A549 (cell line): ENCODE measurements at regions of chr11 and their contacts with region 1.

Region 1: GRCh38 chr11:86608251-86608799 is 64.1 kb downstream of the ME3 start:
- DNase-seq: peak; percentile 47 to 84
- ATAC-seq: peak; percentile 82 to 87
- H3K4me3 ChIP-seq: no peak overlapping the region
- H3K27ac ChIP-seq: peak overlapping the region; percentile 61 to 77
- H3K4me1 ChIP-seq: peaks cover 37% of the 10 kb centered on the region
- CTCF ChIP-seq: peak; percentile 99
- EP300 ChIP-seq: no peak; a peak in 1 of 5 replicates
- POLR2A ChIP-seq: no peak
- RAD21 ChIP-seq: peak; percentile 79 to 95

Region 2: DNA sequence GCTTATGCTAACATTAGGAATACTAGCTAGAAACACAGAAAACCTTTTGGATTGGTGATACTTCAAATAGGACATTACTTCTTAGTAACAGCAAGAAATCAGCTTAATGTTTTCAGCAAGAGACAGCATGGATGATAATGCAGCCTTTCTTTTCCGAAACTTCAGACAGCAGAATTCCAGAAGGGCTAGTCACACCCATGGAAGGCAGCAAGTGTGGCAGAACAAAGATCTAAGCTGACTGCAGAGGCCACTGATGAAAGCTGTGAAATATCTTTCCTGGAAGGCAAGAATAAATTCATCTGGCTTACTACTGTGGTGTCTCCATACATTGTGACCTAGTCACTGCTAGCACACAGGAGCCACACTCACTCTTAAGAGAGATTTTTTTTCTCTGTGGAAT is 652.8 kb before region 1 on chr11:
- CTCF ChIA-PET with region 1: no interaction called
- POLR2A ChIA-PET with region 1: no interaction called
- DNase-seq: no peak
- ATAC-seq: peak in 1 of 2 experiments; percentile 27; a peak in 1 of 6 replicates
- H3K4me3 ChIP-seq: no peak overlapping the region
- H3K27ac ChIP-seq: no peak overlapping the region
- H3K4me1 ChIP-seq: peaks cover 4% of the 10 kb centered on the region; the same call in 1 of the 3 replicates
- CTCF ChIP-seq: no peak
- EP300 ChIP-seq: no peak
- POLR2A ChIP-seq: no peak
- RAD21 ChIP-seq: no peak

Region 3: GRCh38 chr11:86571273-86571948 is 36.9 kb before region 1 on chr11:
- CTCF ChIA-PET with region 1: interaction called, 12 read pairs
- POLR2A ChIA-PET with region 1: no interaction called
- DNase-seq: peak; percentile 69 to 88
- ATAC-seq: peak; percentile 84 to 94
- H3K4me3 ChIP-seq: no peak overlapping the region
- H3K27ac ChIP-seq: peak overlapping the region; percentile 52 to 78
- H3K4me1 ChIP-seq: peaks cover 69% of the 10 kb centered on the region
- CTCF ChIP-seq: peak; percentile 60
- EP300 ChIP-seq: no peak
- POLR2A ChIP-seq: no peak
- RAD21 ChIP-seq: peak; percentile 59 to 73

Region 4: GRCh38 chr11:86592659-86593451 is 15.5 kb before region 1 on chr11:
- CTCF ChIA-PET with region 1: interaction called, 34 read pairs
- POLR2A ChIA-PET with region 1: no interaction called
- DNase-seq: peak; percentile 82 to 97
- ATAC-seq: peak; percentile 84 to 94
- H3K4me3 ChIP-seq: no peak overlapping the region
- H3K27ac ChIP-seq: peak overlapping the region; percentile 89 to 90
- H3K4me1 ChIP-seq: peaks cover 54% of the 10 kb centered on the region
- CTCF ChIP-seq: no peak
- EP300 ChIP-seq: peak; percentile 65 to 81; a peak in 2 of 5 replicates
- POLR2A ChIP-seq: no peak
- RAD21 ChIP-seq: peak in 1 of 2 experiments; percentile 40; a peak in 1 of 5 replicates

Region 5: GRCh38 chr11:86671682-86672621 is 63.6 kb after region 1 on chr11 and contains the start of gene ME3:
- CTCF ChIA-PET with region 1: interaction called, 16 read pairs
- POLR2A ChIA-PET with region 1: no interaction called
- DNase-seq: peak; percentile 60 to 76
- ATAC-seq: peak; percentile 87 to 91
- H3K4me3 ChIP-seq: peak within 1 kb of the TSS; percentile 61
- H3K27ac ChIP-seq: peak within 1 kb of the TSS; percentile 94 to 99
- H3K4me1 ChIP-seq: peaks cover 32% of the 10 kb centered on the region
- CTCF ChIP-seq: no peak
- EP300 ChIP-seq: no peak
- POLR2A ChIP-seq: peak; percentile 10
- RAD21 ChIP-seq: no peak
- polyA plus RNA-seq, gene ME3: 21.4 and 22.3 TPM in 2 replicates

Region 6: GRCh38 chr11:86802601-86803051 is 194.3 kb after region 1 on chr11:
- CTCF ChIA-PET with region 1: interaction called, 44 read pairs
- POLR2A ChIA-PET with region 1: interaction called, 5 read pairs
- DNase-seq: peak; percentile 62 to 84
- ATAC-seq: peak; percentile 40 to 70; a peak in 5 of 6 replicates
- H3K4me3 ChIP-seq: peak overlapping the region; percentile 85
- H3K27ac ChIP-seq: peak overlapping the region; percentile 93 to 96
- H3K4me1 ChIP-seq: peaks cover 65% of the 10 kb centered on the region
- CTCF ChIP-seq: peak; percentile 49
- EP300 ChIP-seq: 0 out of 5 replicates have a peak, but pooled peaks of 1 of the 2 experiments have one; percentile 16
- POLR2A ChIP-seq: no peak
- RAD21 ChIP-seq: peak; percentile 59 to 60

Region 7: DNA sequence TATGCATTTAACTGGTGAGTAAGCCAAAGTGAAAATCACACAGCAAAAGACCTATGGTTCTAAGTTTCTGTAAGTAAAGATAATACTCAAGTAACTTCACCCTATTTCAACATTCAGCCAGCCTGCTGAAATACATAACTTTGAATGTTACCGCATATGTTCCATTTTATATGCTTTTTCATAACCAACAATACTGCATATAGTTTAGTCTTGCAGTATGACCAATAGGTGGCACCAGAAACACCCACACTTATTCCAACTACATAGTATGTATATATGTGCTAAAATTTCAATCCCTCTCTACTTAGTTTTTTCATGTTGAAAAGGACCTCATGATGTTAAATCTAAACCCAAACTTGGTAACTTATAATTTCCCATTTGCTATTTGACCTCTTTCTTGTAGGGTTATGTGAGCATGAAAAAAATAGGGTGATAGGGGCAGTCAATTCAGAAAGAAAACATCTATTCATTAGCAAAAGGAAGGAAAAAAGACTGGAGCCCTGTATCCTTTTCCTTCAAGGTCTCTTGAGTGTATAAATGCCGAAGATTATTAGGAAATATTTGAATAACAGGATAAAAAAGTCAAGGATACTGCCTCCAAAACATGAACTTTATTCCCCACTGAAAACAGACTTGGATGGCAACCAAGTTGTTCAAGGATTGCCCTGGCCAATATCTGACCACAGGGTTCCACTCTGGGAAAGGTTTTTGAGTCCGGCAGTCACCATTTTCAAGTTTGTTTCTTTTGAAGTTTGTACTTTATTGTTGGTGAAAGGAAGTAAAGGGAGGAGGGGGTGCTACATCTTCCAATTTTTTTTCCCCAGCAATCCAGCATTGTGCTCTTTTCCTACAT is 370.7 kb after region 1 on chr11:
- CTCF ChIA-PET with region 1: no interaction called
- POLR2A ChIA-PET with region 1: no interaction called
- DNase-seq: peak; percentile 38 to 56
- ATAC-seq: peak; percentile 88 to 95; a peak in 5 of 6 replicates
- H3K4me3 ChIP-seq: no peak overlapping the region
- H3K27ac ChIP-seq: no peak overlapping the region
- H3K4me1 ChIP-seq: no peaks in the 10 kb centered on the region; the same call in 2 of the 3 replicates
- CTCF ChIP-seq: peak; percentile 69
- EP300 ChIP-seq: no peak
- POLR2A ChIP-seq: no peak
- RAD21 ChIP-seq: peak; percentile 57 to 67; a peak in 4 of 5 replicates